Posterior vena cava (tissue), 2 donors: ENCODE measurements at regions of chr2 and their contacts with region 1.

Region 1: GRCh38 chr2:73414696-73415095 is 29.1 kb downstream of the ALMS1 start:
- DNase-seq: no peak

Region 2: DNA sequence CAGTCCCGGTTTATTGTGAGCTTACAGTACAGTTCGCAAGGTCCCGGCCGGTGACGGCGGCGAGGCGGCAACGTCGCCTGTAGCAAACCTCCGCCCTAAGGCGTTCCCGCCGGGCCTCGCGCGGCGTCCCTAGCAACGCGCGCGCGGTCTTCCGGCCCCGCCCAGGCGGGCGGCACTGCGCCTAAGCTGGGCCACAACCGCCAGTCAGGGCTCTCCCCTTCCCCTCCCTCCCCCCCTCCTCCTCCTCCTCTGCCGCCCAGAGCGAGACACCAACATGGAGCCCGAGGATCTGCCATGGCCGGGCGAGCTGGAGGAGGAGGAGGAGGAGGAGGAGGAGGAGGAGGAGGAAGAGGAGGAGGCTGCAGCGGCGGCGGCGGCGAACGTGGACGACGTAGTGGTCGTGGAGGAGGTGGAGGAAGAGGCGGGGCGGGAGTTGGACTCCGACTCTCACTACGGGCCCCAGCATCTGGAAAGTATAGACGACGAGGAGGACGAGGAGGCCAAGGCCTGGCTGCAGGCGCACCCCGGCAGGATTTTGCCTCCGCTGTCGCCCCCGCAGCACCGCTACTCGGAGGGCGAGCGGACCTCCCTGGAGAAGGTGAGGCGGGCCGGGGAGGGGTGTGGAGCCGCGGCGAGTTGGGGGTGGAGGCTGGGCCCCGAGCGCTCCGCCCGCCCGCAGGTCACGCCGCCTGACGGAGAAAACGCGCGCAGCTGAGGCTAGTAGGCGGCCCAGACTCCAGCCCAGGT is 28.9 kb before region 1 on chr2 and contains the start of gene ALMS1:
- intact Hi-C with region 1: loop called in 1 of 2 experiments (anchors 1 kb)
- DNase-seq: peak; percentile 96
- total RNA-seq, gene ALMS1: 21.2 to 21.4 TPM